ENCODE measurements at regions of chr17 and their contacts with region 1.

Region 1: GRCh38 chr17:4986951-4987766 is at the start of gene CAMTA2:
- DNase-seq: peak; percentile 52
- ATAC-seq: peak; percentile 85
- H3K4me3 ChIP-seq: peak within 1 kb of the TSS; percentile 72 to 97
- H3K27ac ChIP-seq: peak within 1 kb of the TSS; percentile 84
- H3K4me1 ChIP-seq: peaks cover 7 to 24% of the 10 kb centered on the region in 2 experiments
- H3K27me3 ChIP-seq: no peaks in the 10 kb centered on the region
- CTCF ChIP-seq: peak; percentile 66 to 89 (median 73)
- POLR2A ChIP-seq: peak; percentile 82
- RAD21 ChIP-seq: peak; percentile 58
- total RNA-seq, gene CAMTA2: 37.8 TPM

Region 2: GRCh38 chr17:4908301-4908700 is 78.9 kb before region 1 on chr17:
- CTCF ChIA-PET with region 1: interaction called, 7 read pairs
- POLR2A ChIA-PET with region 1: interaction called, 5 read pairs
- RAD21 ChIA-PET with region 1: no interaction called
- intact Hi-C with region 1: loop called (anchors 2 kb)
- DNase-seq: no peak
- ATAC-seq: no peak
- H3K4me3 ChIP-seq: no peak overlapping the region
- H3K27ac ChIP-seq: no peak overlapping the region
- H3K4me1 ChIP-seq: peaks cover 7 to 22% of the 10 kb centered on the region in 2 experiments
- H3K27me3 ChIP-seq: no peaks in the 10 kb centered on the region
- CTCF ChIP-seq: no peak
- POLR2A ChIP-seq: no peak
- RAD21 ChIP-seq: no peak

Region 3: DNA sequence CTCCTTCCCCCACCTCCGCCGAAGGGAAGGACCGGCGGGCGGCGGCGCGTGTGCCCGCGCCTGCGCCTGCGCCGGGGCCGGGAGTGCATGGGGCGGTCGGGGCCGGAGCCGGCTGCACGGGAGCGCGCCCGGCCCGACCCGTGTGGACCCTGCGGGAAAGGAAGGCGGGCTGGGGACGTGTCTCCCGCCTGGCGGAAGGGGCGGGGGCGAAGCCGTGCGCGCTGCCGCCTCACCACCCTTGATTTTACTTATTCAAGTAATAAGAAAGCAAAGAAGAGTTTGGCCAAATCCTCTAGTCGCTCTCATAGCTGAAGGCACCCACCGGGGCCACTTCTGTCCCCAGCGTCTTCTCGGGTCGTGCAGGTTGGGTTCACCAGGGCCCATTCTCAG is 38.2 kb before region 1 on chr17:
- CTCF ChIA-PET with region 1: no interaction called
- POLR2A ChIA-PET with region 1: no interaction called
- RAD21 ChIA-PET with region 1: no interaction called
- intact Hi-C with region 1: loop called (anchors 5 kb)
- DNase-seq: peak; percentile 64
- ATAC-seq: peak; percentile 63
- H3K4me3 ChIP-seq: peak overlapping the region; percentile 96 to 97
- H3K27ac ChIP-seq: peak overlapping the region; percentile 99
- H3K4me1 ChIP-seq: peaks cover 35 to 70% of the 10 kb centered on the region in 2 experiments
- H3K27me3 ChIP-seq: no peaks in the 10 kb centered on the region
- CTCF ChIP-seq: no peak
- POLR2A ChIP-seq: peak; percentile 66
- RAD21 ChIP-seq: no peak

Region 4: GRCh38 chr17:4997302-4998026 is 10.3 kb after region 1 on chr17 and contains the starts of genes INCA1 and KIF1C:
- CTCF ChIA-PET with region 1: no interaction called
- POLR2A ChIA-PET with region 1: interaction called, 16 read pairs
- RAD21 ChIA-PET with region 1: no interaction called
- intact Hi-C with region 1: no loop called
- DNase-seq: peak; percentile 72
- ATAC-seq: peak; percentile 89
- H3K4me3 ChIP-seq: peak within 1 kb of the TSS; percentile 92 to 95
- H3K27ac ChIP-seq: peak within 1 kb of the TSS; percentile 93
- H3K4me1 ChIP-seq: peaks cover 16 to 27% of the 10 kb centered on the region in 2 experiments
- H3K27me3 ChIP-seq: no peaks in the 10 kb centered on the region
- CTCF ChIP-seq: no peak
- POLR2A ChIP-seq: no peak
- RAD21 ChIP-seq: no peak; the same call in 1 of the 2 replicates
- total RNA-seq, gene INCA1: 0.74 TPM
- total RNA-seq, gene KIF1C: 121 TPM

Region 5: DNA sequence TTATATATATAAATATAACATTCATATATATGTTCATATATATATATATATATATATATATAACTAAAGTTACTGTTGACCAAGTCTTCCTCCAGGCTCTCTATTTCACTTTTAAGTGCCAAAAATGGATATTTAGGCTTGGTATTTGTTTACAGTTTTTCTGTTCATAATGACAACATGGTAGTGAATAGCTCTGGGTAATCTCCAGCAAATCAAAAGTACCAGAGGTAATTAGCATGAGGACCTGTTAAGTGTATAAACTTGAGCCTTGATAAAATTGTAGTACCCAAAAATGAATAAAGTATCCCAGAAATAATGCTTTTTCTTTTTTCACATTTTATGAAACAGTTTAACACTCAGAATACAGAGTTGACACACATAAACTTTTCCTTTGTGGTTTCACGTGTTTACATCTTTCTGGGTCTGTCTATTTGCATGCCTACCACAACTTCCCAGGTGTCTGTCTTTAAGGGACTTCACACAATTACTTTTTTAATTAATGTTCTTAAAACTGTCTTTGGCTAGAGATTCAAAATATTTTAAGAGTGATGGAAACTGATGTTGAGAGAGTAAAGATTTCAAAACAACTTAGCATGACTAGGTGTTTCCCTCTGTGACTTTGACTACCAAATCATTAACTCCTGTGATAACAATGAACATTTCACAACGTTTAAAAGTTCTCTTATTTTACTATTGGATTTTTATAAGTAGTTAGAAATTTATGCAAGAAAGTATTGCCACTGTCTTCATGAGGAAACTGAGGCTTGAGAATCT is 342.8 kb after region 1 on chr17:
- CTCF ChIA-PET with region 1: no interaction called
- POLR2A ChIA-PET with region 1: no interaction called
- RAD21 ChIA-PET with region 1: no interaction called
- intact Hi-C with region 1: no loop called
- DNase-seq: no peak
- ATAC-seq: no peak
- H3K4me3 ChIP-seq: no peak overlapping the region
- H3K27ac ChIP-seq: no peak overlapping the region
- H3K4me1 ChIP-seq: peaks cover 0 to 4% of the 10 kb centered on the region in 2 experiments; a peak in 1 of 4 replicates
- H3K27me3 ChIP-seq: no peaks in the 10 kb centered on the region
- CTCF ChIP-seq: no peak
- POLR2A ChIP-seq: no peak
- RAD21 ChIP-seq: no peak